ENCODE measurements at regions of chr21 and their contacts with region 1.

Region 1: DNA sequence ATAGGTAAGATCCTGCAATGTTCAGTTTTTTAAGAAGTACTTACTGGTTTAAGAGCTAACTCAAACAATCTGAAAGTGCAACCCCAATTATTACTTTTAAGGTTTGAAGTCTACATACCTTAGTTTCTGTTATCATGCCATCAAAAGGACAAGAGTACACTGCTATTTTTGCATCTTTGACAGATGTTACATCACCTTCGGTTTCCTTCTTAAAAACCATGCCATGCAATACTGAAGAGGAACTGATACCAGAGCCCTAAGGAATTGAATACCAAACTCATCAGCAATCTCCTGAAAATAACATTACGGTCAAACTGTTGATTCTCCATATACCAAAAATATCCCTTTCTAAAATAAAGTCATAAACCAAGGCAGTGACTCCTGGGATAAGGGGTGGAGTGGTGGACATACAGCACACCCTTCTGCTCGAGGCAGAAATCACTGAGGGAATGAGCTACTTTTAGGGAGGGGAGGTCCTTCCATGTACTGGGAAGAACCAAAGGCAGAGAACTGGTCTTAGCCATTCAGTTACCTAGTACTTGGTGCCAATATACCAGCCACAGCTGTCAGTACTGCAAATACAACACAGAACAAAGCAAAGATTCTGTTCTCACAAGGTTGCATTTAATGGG is 8.5 kb downstream of the CCT8 start:
- DNase-seq: no peak
- ATAC-seq: no peak
- H3K4me3 ChIP-seq: no peak overlapping the region
- H3K27ac ChIP-seq: no peak overlapping the region
- H3K4me1 ChIP-seq: no peaks in the 10 kb centered on the region
- H3K27me3 ChIP-seq: no peaks in the 10 kb centered on the region
- CTCF ChIP-seq: no peak
- EP300 ChIP-seq: no peak
- POLR2A ChIP-seq: no peak
- RAD21 ChIP-seq: no peak

Region 2: GRCh38 chr21:29002442-29003144 is 62.4 kb before region 1 on chr21:
- CTCF ChIA-PET with region 1: no interaction called
- POLR2A ChIA-PET with region 1: no interaction called
- in situ Hi-C with region 1: no loop called
- intact Hi-C with region 1: no loop called
- DNase-seq: peak; percentile 92
- ATAC-seq: peak; percentile 100
- H3K4me3 ChIP-seq: peak overlapping the region; percentile 78 to 92 (median 81)
- H3K27ac ChIP-seq: peak overlapping the region; percentile 92
- H3K4me1 ChIP-seq: peaks cover 17% of the 10 kb centered on the region
- H3K27me3 ChIP-seq: no peaks in the 10 kb centered on the region
- CTCF ChIP-seq: no peak
- EP300 ChIP-seq: 0 out of 4 replicates have a peak, but pooled peaks of 1 of the 2 experiments have one; percentile 4
- POLR2A ChIP-seq: peak; percentile 96 to 97
- RAD21 ChIP-seq: peak; percentile 51; the same call in 1 of the 2 replicates

Region 3: GRCh38 chr21:29034678-29035077 is 30.3 kb before region 1 on chr21:
- CTCF ChIA-PET with region 1: no interaction called
- POLR2A ChIA-PET with region 1: no interaction called
- in situ Hi-C with region 1: loop called (anchors 5 kb)
- intact Hi-C with region 1: no loop called
- DNase-seq: no peak
- ATAC-seq: no peak
- H3K4me3 ChIP-seq: no peak overlapping the region
- H3K27ac ChIP-seq: no peak overlapping the region
- H3K4me1 ChIP-seq: no peaks in the 10 kb centered on the region
- H3K27me3 ChIP-seq: no peaks in the 10 kb centered on the region
- CTCF ChIP-seq: no peak
- EP300 ChIP-seq: no peak
- POLR2A ChIP-seq: no peak
- RAD21 ChIP-seq: no peak